Activated CD4-positive, alpha-beta T cell treated with anti-CD3 and anti-CD28 coated beads, Interleukin-2, amount 10 ng/mL, durations not matched to agents 24 days and 14 days (primary cell): ENCODE measurements at regions of chr18 and their contacts with region 1.

Region 1: DNA sequence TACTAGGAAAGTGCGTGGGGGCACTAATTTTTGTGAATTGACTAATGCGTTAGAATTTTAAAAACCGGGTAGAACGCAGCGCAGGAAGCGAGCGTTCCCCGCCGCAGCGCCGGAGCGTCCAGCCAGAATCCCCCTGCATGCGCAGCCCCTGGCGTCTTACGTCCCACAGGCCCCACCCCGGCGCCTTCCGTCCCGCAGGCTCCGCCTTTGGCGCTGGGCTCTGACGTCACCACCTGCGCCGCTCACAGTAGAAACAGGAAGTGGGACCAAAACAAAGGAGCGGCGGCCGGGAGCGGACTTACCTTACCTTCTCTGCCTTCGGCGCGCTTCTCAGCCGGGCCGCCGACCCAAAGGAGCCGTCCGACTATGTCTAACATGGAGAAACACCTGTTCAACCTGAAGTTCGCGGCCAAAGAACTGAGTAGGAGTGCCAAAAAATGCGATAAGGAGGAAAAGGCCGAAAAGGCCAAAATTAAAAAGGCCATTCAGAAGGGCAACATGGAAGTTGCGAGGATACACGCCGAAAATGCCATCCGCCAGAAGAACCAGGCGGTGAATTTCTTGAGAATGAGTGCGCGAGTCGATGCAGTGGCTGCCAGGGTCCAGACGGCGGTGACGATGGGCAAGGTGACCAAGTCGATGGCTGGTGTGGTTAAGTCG is at the start of gene CHMP1B:
- DNase-seq: peak; percentile 99
- H3K4me3 Mint-ChIP-seq: peak within 1 kb of the TSS; percentile 99
- H3K27ac Mint-ChIP-seq: peak within 1 kb of the TSS; percentile 100
- H3K4me1 Mint-ChIP-seq: peaks cover 24% of the 10 kb centered on the region
- H3K27me3 Mint-ChIP-seq: peaks cover 2% of the 10 kb centered on the region
- total RNA-seq, gene CHMP1B: 22.7 and 24.4 TPM in 2 replicates

Region 2: DNA sequence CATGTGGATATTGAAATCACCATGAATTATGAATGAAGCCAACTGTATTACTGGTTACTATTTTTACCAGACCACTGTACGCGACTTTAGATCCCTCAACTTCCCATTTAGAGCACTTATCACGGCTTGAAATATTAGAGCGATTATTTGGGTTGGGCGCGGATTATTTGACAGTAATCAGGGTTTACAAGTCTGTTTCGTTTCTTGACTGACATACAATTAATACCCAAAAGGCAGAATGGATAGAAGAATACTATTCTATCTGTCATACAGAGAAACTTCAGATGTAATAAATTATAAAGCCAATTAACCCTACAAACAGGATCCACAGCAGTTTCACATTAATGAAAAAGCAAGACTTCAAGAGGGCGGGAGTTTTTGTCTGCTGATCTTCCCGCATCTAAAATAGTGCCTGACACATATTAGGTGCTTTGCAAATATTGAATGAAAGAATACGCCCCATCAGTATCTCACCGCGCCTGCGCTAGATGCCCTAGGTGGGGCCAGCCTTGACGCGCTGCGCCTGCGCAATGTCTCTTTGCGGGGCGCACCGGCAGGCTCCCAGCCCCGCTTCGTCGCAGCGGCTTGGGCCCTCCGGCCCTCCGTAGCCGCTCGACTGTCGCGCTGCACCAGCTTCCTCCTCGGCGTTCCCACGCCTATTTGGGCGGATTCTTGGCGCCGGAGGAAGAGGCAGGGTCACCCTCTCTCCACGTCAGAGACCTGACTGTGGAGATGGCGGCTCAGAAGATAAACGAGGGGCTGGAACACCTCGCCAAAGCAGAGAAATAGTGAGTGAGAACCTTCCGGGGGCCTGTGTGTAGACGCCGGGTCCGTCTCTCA is 1325.7 kb before region 1 on chr18 and contains the start of gene NAPG:
- intact Hi-C with region 1: loop called (anchors 5 kb)
- DNase-seq: peak; percentile 98
- H3K4me3 Mint-ChIP-seq: peak within 1 kb of the TSS; percentile 96
- H3K27ac Mint-ChIP-seq: peak within 1 kb of the TSS; percentile 98
- H3K4me1 Mint-ChIP-seq: peaks cover 41% of the 10 kb centered on the region
- H3K27me3 Mint-ChIP-seq: peaks cover 8% of the 10 kb centered on the region
- total RNA-seq, gene NAPG: 36.4 and 38.7 TPM in 2 replicates

Region 3: GRCh38 chr18:11733031-11733430 is 118.2 kb before region 1 on chr18:
- intact Hi-C with region 1: loop called (anchors 10 kb)
- DNase-seq: peak; percentile 92
- H3K4me3 Mint-ChIP-seq: peak overlapping the region; percentile 44
- H3K27ac Mint-ChIP-seq: no peak overlapping the region
- H3K4me1 Mint-ChIP-seq: peaks cover 4% of the 10 kb centered on the region
- H3K27me3 Mint-ChIP-seq: peaks cover 25% of the 10 kb centered on the region

Region 4: DNA sequence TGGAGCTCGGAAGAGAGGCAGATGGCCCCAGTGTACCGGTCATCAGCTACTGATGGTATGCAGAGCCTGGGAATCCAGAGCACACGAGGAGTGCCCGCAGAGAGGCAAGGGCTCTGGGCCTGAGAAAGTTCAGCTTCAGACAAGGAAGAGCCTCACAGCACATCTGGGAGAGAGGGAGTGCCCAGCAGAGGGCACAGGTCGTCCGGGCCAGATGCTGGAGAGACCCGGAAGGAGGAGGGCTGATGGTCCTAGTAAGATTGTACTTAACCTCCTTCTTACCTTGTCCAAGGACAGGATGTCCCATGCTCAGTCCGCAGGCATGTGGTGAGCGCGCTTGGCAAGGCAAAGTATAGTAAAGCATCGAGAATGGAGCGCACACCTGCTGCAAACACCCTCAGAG is 24.4 kb before region 1 on chr18:
- intact Hi-C with region 1: no loop called
- DNase-seq: no peak
- H3K4me3 Mint-ChIP-seq: no peak overlapping the region
- H3K27ac Mint-ChIP-seq: no peak overlapping the region
- H3K4me1 Mint-ChIP-seq: peaks cover 2% of the 10 kb centered on the region
- H3K27me3 Mint-ChIP-seq: no peaks in the 10 kb centered on the region

Region 5: GRCh38 chr18:11908182-11909060 is 57.1 kb after region 1 on chr18 and contains the start of gene MPPE1:
- intact Hi-C with region 1: loop called (anchors 1 kb)
- DNase-seq: peak; percentile 97
- H3K4me3 Mint-ChIP-seq: peak within 1 kb of the TSS; percentile 95
- H3K27ac Mint-ChIP-seq: peak within 1 kb of the TSS; percentile 94
- H3K4me1 Mint-ChIP-seq: peaks cover 19% of the 10 kb centered on the region
- H3K27me3 Mint-ChIP-seq: no peaks in the 10 kb centered on the region
- total RNA-seq, gene MPPE1: 39.2 and 45.8 TPM in 2 replicates

Region 6: GRCh38 chr18:11980555-11981382 is 129.5 kb after region 1 on chr18:
- intact Hi-C with region 1: loop called (anchors 1 kb)
- DNase-seq: peak; percentile 99
- H3K4me3 Mint-ChIP-seq: peak overlapping the region; percentile 91
- H3K27ac Mint-ChIP-seq: peak overlapping the region; percentile 89
- H3K4me1 Mint-ChIP-seq: peaks cover 17% of the 10 kb centered on the region
- H3K27me3 Mint-ChIP-seq: peaks cover 10% of the 10 kb centered on the region

Region 7: GRCh38 chr18:12038639-12039417 is 187.6 kb after region 1 on chr18:
- intact Hi-C with region 1: loop called (anchors 5 kb)
- DNase-seq: peak; percentile 94
- H3K4me3 Mint-ChIP-seq: peak overlapping the region; percentile 82
- H3K27ac Mint-ChIP-seq: peak overlapping the region; percentile 41
- H3K4me1 Mint-ChIP-seq: peaks cover 17% of the 10 kb centered on the region
- H3K27me3 Mint-ChIP-seq: peaks cover 9% of the 10 kb centered on the region